Right ventricle myocardium superior (tissue), 1 donor: ENCODE measurements at regions of chr15 and their contacts with region 1.

Region 1: DNA sequence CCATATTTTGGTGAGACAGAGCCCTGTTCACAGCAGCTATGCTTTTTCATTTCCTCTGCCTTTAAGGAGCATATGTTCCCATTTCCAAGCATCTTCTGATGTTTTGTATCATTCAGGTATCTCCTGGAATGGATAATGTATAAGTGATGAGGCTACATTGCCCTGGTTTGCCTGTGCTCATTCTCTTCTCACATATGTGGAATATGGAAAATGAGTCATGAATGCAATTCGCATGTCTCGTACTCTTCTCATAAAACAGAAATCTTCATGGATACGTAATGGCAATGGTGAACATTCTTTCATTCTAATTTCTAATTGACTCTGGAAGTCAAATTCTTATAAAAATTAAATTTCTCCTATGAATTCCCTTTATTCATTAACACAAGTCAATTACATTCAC is 143.1 kb downstream of the CDIN1 start:
- DNase-seq: no peak
- ATAC-seq: no peak

Region 2: GRCh38 chr15:36742696-36743095 is 20.1 kb after region 1 on chr15:
- intact Hi-C with region 1: loop called (anchors 2 kb)
- DNase-seq: no peak
- ATAC-seq: no peak